ENCODE measurements at regions of chr9 and their contacts with region 1.

Region 1: DNA sequence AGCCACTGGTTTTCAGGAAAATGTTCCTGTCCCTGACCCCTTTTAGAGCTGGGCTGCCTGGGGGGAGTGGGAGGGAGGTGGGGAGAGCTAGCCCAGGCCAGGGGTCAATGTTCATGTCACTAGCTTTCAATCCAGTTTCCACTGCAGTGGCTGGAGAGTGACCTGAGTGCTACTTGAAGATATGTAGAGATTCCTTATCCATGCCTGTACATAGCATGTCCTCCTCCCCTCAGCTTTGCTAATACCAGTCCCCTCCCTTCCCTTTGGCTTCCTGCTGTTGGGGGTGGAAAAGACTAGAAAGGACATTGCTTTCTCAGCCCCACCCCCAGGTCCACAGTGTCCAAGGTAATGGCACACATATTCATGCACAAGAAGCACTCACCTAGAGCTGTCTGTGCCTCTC is 7.8 kb downstream of the DNAJB5 start:
- DNase-seq: no peak
- ATAC-seq: no peak
- H3K4me3 ChIP-seq: no peak overlapping the region
- H3K4me3 Mint-ChIP-seq: no peak overlapping the region
- H3K27ac ChIP-seq: no peak overlapping the region
- H3K27ac Mint-ChIP-seq: no peak overlapping the region
- H3K4me1 ChIP-seq: no peaks in the 10 kb centered on the region
- H3K4me1 Mint-ChIP-seq: peaks cover 0 to 14% (median 6%) of the 10 kb centered on the region in 3 donors
- H3K27me3 ChIP-seq: no peaks in the 10 kb centered on the region
- H3K27me3 Mint-ChIP-seq: no peaks in the 10 kb centered on the region

Region 2: GRCh38 chr9:34974664-34975063 is 22.7 kb before region 1 on chr9:
- CTCF ChIA-PET with region 1: interaction called in 1 of 2 experiments, 13 read pairs
- POLR2A ChIA-PET with region 1: no interaction called
- DNase-seq: no peak
- ATAC-seq: no peak
- H3K4me3 ChIP-seq: no peak overlapping the region
- H3K4me3 Mint-ChIP-seq: no peak overlapping the region
- H3K27ac ChIP-seq: no peak overlapping the region
- H3K27ac Mint-ChIP-seq: no peak overlapping the region
- H3K4me1 ChIP-seq: no peaks in the 10 kb centered on the region
- H3K4me1 Mint-ChIP-seq: no peaks in the 10 kb centered on the region
- H3K27me3 ChIP-seq: peaks cover 0 to 28% of the 10 kb centered on the region in 2 experiments
- H3K27me3 Mint-ChIP-seq: peaks cover 3 to 6% of the 10 kb centered on the region in 2 donors

Measured in T-cell (primary cell).